ENCODE measurements at regions of chr19 and their contacts with region 1.

Region 1: DNA sequence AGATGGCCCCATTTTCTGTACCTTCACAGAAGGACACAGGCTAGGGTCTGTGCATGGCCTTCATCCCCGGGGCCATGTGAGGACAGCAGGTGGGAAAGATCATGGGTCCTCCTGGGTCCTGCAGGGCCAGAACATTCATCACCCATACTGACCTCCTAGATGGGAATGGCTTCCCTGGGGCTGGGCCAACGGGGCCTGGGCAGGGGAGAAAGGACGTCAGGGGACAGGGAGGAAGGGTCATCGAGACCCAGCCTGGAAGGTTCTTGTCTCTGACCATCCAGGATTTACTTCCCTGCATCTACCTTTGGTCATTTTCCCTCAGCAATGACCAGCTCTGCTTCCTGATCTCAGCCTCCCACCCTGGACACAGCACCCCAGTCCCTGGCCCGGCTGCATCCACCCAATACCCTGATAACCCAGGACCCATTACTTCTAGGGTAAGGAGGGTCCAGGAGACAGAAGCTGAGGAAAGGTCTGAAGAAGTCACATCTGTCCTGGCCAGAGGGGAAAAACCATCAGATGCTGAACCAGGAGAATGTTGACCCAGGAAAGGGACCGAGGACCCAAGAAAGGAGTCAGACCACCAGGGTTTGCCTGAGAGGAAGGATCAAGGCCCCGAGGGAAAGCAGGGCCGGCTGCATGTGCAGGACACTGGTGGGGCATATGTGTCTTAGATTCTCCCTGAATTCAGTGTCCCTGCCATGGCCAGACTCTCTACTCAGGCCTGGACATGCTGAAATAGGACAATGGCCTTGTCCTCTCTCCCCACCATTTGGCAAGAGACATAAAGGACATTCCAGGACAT is 7.0 kb upstream of the CEACAM7 start:
- DNase-seq: no peak
- H3K4me3 ChIP-seq: no peak overlapping the region
- H3K27ac ChIP-seq: no peak overlapping the region
- H3K4me1 ChIP-seq: no peaks in the 10 kb centered on the region
- H3K27me3 ChIP-seq: peaks cover 0 to 26% of the 10 kb centered on the region in 2 donors
- CTCF ChIP-seq: no peak
- POLR2A ChIP-seq: no peak

Region 2: DNA sequence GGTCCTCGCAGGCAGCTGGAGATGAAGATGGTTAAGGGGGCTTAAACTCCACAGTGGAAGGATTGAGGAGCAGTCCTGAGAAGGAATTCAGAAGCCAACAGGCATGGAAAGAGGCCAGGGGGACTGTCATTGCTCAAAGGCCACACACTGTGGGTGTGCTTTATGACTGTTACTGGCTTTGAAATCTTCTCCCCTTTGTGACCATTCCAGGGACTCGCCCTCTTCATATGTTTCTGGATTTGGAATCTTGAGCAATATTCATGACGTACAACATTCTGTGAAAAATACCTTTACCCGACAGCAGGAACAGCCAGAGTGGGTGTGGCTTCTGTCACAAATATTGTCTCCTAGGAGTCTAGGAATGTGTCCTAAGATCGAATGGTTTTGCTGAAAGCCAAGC is 23.5 kb before region 1 on chr19:
- intact Hi-C with region 1: loop called (anchors 1 kb)
- DNase-seq: no peak
- H3K4me3 ChIP-seq: no peak overlapping the region
- H3K27ac ChIP-seq: no peak overlapping the region
- H3K4me1 ChIP-seq: no peaks in the 10 kb centered on the region
- H3K27me3 ChIP-seq: peaks cover 0 to 38% of the 10 kb centered on the region in 2 donors
- CTCF ChIP-seq: no peak
- POLR2A ChIP-seq: no peak

Region 3: DNA sequence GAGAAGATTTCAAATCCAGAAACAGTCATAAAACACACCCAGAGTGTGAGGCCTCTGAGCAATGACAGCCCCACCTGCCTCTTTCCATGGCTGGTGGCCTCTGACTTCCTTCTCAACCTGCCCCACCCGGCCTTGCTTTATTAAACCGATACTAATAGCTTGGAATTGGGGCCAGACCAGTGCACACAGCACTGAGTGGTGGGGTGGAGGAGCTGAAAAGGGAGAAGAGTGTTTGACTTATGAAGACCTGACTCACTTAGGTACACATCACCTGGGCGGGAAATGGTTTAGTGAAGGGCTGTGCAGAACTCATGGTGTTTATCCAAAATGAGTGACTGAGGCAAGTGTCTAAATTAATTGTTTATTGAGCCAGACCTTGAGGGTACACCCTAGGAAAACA is 39.6 kb after region 1 on chr19:
- intact Hi-C with region 1: no loop called
- DNase-seq: no peak
- H3K4me3 ChIP-seq: no peak overlapping the region
- H3K27ac ChIP-seq: peak overlapping the region in 1 of 2 donors; percentile 55
- H3K4me1 ChIP-seq: no peaks in the 10 kb centered on the region
- H3K27me3 ChIP-seq: peaks cover 0 to 4% of the 10 kb centered on the region in 2 donors
- CTCF ChIP-seq: no peak
- POLR2A ChIP-seq: no peak

Region 4: GRCh38 chr19:41746593-41747227 is 51.7 kb after region 1 on chr19:
- intact Hi-C with region 1: no loop called
- DNase-seq: no peak
- H3K4me3 ChIP-seq: no peak overlapping the region
- H3K27ac ChIP-seq: no peak overlapping the region
- H3K4me1 ChIP-seq: no peaks in the 10 kb centered on the region
- H3K27me3 ChIP-seq: peaks cover 0 to 9% of the 10 kb centered on the region in 2 donors
- CTCF ChIP-seq: peak in 2 of 3 donors; percentile 49 to 50
- POLR2A ChIP-seq: no peak

Region 5: GRCh38 chr19:41859213-41859617 is 164.2 kb after region 1 on chr19:
- intact Hi-C with region 1: no loop called
- DNase-seq: no peak
- H3K4me3 ChIP-seq: peak overlapping the region; percentile 86 to 98 (median 92)
- H3K27ac ChIP-seq: peak overlapping the region; percentile 96 to 99
- H3K4me1 ChIP-seq: peaks cover 7 to 23% of the 10 kb centered on the region in 2 donors
- H3K27me3 ChIP-seq: no peaks in the 10 kb centered on the region
- CTCF ChIP-seq: no peak
- POLR2A ChIP-seq: no peak

Region 6: DNA sequence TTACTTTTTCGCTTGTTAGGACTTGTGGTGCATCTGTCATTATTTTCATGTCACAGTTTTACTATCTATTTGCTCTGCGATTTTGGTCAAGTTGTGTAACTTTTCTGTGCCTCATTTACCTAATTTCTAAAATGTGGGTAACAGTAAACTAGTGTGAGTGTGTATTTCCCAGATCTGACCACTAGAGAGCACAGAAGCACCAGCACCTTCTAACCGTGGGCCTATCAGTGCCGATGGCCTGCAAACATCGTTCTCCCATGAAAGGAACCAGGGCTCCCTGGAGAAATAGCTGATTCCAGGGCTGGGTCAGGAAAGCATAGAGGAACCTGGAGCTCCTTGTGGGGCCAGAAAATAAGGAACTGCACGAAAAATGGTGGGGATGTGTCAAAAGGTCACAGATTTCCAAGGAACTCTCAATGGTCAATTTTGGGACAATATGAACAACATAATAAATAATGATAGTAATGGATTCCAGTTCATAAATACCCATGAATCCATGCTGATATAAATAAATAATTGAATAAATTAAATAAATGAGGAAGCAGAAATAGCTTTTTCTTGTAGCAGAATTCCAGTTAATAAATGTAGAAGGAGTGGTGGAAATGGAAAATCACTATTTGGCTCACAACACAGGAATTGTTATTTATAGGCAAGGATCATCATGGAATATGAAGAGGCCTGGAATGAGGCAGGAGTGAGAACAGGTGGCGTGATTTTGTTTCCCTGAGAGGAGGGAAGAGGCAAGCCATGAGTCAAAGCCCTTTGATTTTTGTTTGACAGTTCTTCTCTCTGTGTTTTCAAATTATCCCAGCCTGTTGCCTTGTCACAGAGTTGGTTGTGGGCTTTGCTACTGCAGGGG is 868.5 kb after region 1 on chr19:
- intact Hi-C with region 1: no loop called
- DNase-seq: no peak
- H3K4me3 ChIP-seq: no peak overlapping the region
- H3K27ac ChIP-seq: no peak overlapping the region
- H3K4me1 ChIP-seq: peaks cover 0 to 4% of the 10 kb centered on the region in 2 donors
- H3K27me3 ChIP-seq: no peaks in the 10 kb centered on the region
- CTCF ChIP-seq: peak; percentile 32 to 50 (median 50)
- POLR2A ChIP-seq: no peak

Measured in breast epithelium (tissue), 4 donors.